ENCODE measurements at regions of chr12 and their contacts with region 1.

Region 1: DNA sequence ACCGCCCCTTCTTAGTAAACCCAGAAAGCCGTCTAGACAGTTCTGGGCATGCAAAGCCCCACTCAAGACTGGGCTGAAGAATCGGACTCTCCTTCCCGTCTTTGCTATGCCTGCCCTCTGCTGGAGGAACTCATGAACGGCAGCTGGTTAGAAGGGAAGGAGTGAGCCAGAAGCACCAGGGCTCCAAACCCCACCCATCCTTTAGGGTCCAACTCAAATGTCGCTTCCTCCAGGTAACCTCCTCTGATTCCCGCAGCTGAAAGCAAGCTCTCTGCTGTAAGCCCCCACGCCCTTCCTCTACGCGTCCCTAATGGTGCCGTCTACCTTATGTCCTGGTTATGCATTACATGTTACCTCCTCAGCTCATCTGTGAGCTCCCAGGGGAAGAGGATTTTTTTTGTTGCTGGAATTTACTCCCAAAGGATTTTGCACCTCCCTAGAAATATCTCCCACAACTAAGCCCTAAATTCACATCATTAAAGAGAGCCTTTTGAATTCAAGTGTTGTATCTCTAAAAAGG is 59.0 kb upstream of the SCN8A start:
- DNase-seq: peak in 3 of 4 donors; percentile 41 to 80 (median 69)
- ATAC-seq: peak; percentile 99
- H3K4me3 ChIP-seq: no peak overlapping the region
- H3K27ac ChIP-seq: no peak overlapping the region
- H3K4me1 ChIP-seq: peaks cover 0 to 5% of the 10 kb centered on the region in 2 donors
- H3K27me3 ChIP-seq: peaks cover 0 to 49% of the 10 kb centered on the region in 2 donors
- CTCF ChIP-seq: peak; percentile 69 to 86

Region 2: GRCh38 chr12:51424662-51425438 is 107.2 kb before region 1 on chr12 and contains the start of gene SLC4A8:
- intact Hi-C with region 1: loop called in 1 of 2 experiments (anchors 5 kb)
- DNase-seq: peak; percentile 59 to 91 (median 78)
- ATAC-seq: peak; percentile 92
- H3K4me3 ChIP-seq: peak within 1 kb of the TSS; percentile 31 to 49
- H3K27ac ChIP-seq: no peak within 1 kb of the TSS
- H3K4me1 ChIP-seq: peaks cover 0 to 12% of the 10 kb centered on the region in 2 donors
- H3K27me3 ChIP-seq: peaks cover 4 to 54% of the 10 kb centered on the region in 2 donors
- CTCF ChIP-seq: peak; percentile 57 to 66
- polyA plus RNA-seq, gene SLC4A8: 1.3 to 2.0 (median 1.7) TPM

Region 3: DNA sequence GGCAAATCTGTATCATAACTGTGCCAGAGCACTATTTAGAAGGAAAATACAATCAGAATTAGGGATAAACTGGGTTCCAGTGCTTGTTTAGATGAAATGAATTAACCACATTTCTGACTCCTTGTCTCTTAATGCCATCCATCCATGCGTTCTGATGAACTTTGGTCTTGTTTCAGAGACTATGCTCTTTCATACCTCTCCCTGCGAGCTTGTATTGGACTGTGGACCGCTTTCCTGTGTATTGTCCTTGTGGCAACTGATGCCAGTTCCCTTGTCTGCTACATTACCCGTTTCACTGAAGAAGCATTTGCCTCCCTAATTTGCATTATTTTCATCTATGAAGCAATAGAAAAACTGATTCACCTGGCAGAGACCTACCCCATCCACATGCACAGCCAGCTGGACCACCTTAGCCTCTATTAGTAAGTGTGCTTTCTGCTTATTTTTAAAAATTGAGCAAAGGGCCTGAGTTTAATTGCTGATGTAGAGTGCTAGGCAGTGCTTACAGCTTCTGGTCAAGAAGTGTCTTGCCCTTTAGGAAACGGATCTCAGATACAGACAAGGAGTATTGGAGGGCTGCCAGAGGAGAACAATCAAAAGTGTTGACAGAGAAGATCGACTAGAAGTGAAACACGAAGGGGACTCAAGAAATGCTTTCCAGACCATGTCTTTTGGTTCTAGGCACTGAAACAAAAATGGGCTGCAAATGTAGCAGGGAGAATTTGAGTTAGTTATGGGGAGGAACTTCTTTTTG is 60.8 kb before region 1 on chr12:
- intact Hi-C with region 1: no loop called
- DNase-seq: no peak
- ATAC-seq: no peak
- H3K4me3 ChIP-seq: no peak overlapping the region
- H3K27ac ChIP-seq: no peak overlapping the region
- H3K4me1 ChIP-seq: no peaks in the 10 kb centered on the region
- H3K27me3 ChIP-seq: no peaks in the 10 kb centered on the region
- CTCF ChIP-seq: no peak

Region 4: GRCh38 chr12:51590347-51591019 is 58.4 kb after region 1 on chr12:
- intact Hi-C with region 1: no loop called
- DNase-seq: peak in 2 of 4 donors; percentile 68 to 86
- ATAC-seq: peak; percentile 92
- H3K4me3 ChIP-seq: peak overlapping the region in 1 of 2 donors; percentile 50
- H3K27ac ChIP-seq: no peak overlapping the region
- H3K4me1 ChIP-seq: peaks cover 0 to 13% of the 10 kb centered on the region in 2 donors
- H3K27me3 ChIP-seq: peaks cover 44 to 86% of the 10 kb centered on the region in 2 donors
- CTCF ChIP-seq: peak; percentile 19 to 29

Region 5: DNA sequence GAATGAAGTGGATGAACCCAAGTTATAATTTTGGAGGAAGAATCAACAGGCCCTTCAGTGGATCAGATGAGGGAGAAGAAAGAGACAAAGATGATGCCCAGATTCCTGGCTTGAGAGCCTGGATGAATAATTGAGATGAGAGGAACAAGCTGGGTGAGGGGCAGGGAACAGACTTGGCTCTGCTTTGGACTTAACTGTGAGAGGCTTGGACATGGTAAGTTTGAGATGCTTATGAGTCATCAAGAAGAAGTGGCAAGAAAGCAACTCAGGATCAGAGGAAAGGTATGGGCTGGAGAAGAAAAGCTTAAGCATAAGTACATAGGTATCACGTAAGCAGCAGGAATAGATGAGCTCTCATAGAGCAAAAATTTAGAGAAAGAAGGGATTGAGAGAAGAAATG is 261.2 kb after region 1 on chr12:
- intact Hi-C with region 1: loop called in 1 of 2 experiments (anchors 10 kb)
- DNase-seq: no peak
- ATAC-seq: no peak
- H3K4me3 ChIP-seq: no peak overlapping the region
- H3K27ac ChIP-seq: no peak overlapping the region
- H3K4me1 ChIP-seq: no peaks in the 10 kb centered on the region
- H3K27me3 ChIP-seq: no peaks in the 10 kb centered on the region
- CTCF ChIP-seq: no peak